Mucosa of descending colon (tissue), 3 donors: ENCODE measurements at regions of chr22 and their contacts with region 1.

Region 1: GRCh38 chr22:44625981-44626687 is 75.9 kb upstream of the PRR5 start:
- DNase-seq: peak; percentile 69 to 80 (median 74)
- ATAC-seq: peak; percentile 91
- H3K4me3 ChIP-seq: no peak overlapping the region
- H3K4me1 ChIP-seq: no peaks in the 10 kb centered on the region
- CTCF ChIP-seq: peak; percentile 87

Region 2: DNA sequence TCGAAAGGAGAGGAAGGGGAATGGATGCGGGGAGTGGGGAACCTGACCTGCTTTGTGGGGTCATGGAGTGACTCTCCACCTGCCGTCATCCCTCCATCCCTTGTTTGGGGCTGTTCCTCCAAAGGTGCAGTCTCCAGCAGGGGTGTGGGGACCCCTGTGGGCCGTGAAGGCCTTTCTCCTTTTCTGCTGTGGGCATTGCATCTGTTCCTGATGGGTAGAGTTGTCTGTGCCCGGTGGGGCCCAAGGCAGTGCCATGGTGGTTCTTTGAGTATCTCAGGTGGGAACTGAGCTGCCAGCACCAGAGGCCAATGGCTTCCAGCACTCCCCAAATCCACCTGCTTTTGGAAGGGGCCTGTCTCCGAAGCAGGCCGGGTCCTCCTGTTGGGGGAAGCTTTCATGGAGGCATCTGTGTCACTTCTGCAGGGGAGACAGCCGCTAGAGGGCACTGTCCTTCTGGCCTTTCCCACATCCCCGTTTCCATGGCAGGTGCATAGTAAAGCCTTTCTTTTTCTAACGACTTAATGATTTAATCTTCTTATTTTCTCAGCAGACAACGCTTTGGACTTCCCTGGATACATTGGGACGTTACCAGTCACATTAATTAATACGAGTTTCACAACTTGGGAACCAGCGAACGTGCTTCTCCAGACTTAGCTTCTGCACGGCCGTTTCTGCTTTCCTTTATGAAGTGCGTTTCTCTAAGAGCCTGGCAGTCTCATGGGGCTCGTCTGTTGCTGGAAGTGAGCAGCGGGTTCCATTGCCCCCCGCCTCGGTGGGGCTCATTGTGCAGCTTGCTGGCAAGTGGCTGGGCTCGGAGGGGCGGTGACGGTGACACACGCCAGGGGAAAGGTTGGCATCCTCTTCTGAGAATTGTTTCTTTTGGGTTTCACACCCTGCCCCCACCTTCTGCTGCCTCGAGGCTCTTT is 544.9 kb before region 1 on chr22:
- intact Hi-C with region 1: loop called in 1 of 2 experiments (anchors 10 kb)
- DNase-seq: peak in 2 of 3 donors; percentile 71 to 92
- ATAC-seq: peak; percentile 61
- H3K4me3 ChIP-seq: no peak overlapping the region
- H3K4me1 ChIP-seq: no peaks in the 10 kb centered on the region
- CTCF ChIP-seq: peak; percentile 55

Region 3: GRCh38 chr22:44567846-44568493 is 58.2 kb before region 1 on chr22:
- intact Hi-C with region 1: no loop called
- DNase-seq: peak; percentile 48 to 62 (median 51)
- ATAC-seq: no peak
- H3K4me3 ChIP-seq: no peak overlapping the region
- H3K4me1 ChIP-seq: no peaks in the 10 kb centered on the region
- CTCF ChIP-seq: peak; percentile 31